Naive thymus-derived CD8-positive, alpha-beta T cell (primary cell): ENCODE measurements at regions of chr17 and their contacts with region 1.

Region 1: DNA sequence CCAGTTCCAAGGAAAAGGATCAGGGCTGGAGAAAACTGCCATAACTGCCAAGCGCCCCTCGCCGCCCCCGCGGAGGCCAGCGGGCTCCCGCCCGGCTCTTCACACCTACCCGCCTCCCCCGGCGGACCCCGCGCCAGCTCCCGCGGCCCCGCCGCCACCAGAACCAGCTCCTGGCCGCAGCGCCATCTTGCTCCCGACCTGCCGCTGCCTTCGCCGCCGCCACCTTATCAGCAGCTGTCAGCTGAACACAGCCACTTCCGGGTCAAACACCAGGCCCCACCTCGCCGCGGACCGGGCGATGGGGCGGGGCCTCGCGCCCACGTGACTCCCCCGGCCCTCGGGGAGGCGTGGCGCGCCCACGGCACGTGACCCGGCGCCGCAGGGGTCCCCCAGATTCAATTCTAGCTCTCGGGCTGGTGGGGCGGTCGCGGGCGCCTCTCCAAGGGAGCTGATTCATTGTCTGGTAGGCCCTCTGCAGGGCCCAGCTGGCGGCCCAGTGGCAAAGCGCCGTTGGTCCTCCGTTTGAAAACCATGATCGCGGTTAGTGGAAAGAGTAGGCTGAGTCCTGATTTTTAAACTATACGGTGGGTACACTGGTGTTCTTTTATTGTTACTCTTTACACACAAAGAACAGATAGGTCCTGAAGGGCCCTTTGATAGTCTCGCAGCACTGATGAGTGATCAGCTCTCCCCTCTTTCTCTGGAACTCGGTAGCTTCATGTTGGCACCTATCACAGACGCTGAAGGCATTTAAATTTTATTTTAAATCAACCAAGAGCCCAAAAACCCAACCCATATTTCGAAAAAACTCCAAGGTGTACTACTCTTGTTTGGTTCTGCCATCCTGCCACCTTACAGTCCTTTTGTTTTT is at the start of gene SYNRG:
- DNase-seq: peak; percentile 93 to 97 (median 96)
- ATAC-seq: peak; percentile 89 to 90
- H3K4me3 Mint-ChIP-seq: peak within 1 kb of the TSS; percentile 76 to 98 (median 88)
- H3K27ac Mint-ChIP-seq: peak within 1 kb of the TSS; percentile 90 to 96 (median 95)
- H3K4me1 Mint-ChIP-seq: peaks cover 19 to 47% (median 33%) of the 10 kb centered on the region in 4 donors
- H3K27me3 Mint-ChIP-seq: no peaks in the 10 kb centered on the region
- polyA plus RNA-seq, gene SYNRG: 71.8 to 91.8 (median 87.2) TPM

Region 2: DNA sequence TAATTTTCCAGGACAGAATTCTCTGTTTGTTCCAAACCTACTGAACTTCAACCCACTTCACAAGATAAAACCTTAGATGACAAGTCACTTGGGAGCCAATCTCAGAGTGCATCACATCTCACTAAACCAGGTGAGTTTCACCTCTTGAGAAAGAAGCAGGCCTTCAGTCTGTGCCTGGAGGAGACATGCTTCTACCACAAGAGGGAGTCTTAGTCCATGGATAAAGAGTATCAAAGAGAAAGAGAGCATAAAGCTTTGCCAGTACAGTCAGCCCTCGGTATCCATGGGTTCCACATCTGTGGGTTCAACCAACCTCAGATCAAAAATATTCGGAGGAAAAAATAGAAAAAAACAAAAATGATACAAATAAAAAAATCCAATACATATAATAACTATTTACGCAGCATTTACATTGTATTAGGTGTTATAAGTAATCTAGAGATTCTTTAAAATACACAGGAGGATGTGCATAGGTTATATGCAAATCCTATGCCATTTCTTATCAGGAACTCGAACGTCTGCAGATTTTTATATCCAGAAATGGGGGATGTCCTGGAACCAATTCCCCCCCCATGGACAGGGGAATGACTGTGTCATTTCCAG is 82.1 kb before region 1 on chr17:
- POLR2A ChIA-PET with region 1: interaction called, 17 read pairs
- DNase-seq: peak in 7 of 10 donors; percentile 27 to 65 (median 40)
- ATAC-seq: peak; percentile 83 to 88
- H3K4me3 Mint-ChIP-seq: no peak overlapping the region
- H3K27ac Mint-ChIP-seq: peak overlapping the region; percentile 2 to 92 (median 46)
- H3K4me1 Mint-ChIP-seq: peaks cover 14 to 26% (median 19%) of the 10 kb centered on the region in 4 donors
- H3K27me3 Mint-ChIP-seq: no peaks in the 10 kb centered on the region

Region 3: GRCh38 chr17:37592291-37592690 is 17.1 kb before region 1 on chr17:
- POLR2A ChIA-PET with region 1: interaction called, 16 read pairs
- DNase-seq: no peak
- ATAC-seq: no peak
- H3K4me3 Mint-ChIP-seq: peak overlapping the region in 6 of 10 donors; percentile 5 to 53 (median 42)
- H3K27ac Mint-ChIP-seq: peak overlapping the region in 5 of 10 donors; percentile 13 to 82 (median 44)
- H3K4me1 Mint-ChIP-seq: peaks cover 21 to 81% (median 69%) of the 10 kb centered on the region in 4 donors
- H3K27me3 Mint-ChIP-seq: no peaks in the 10 kb centered on the region

Region 4: GRCh38 chr17:37651849-37652248 is 42.4 kb after region 1 on chr17:
- POLR2A ChIA-PET with region 1: no interaction called
- DNase-seq: no peak
- ATAC-seq: no peak
- H3K4me3 Mint-ChIP-seq: no peak overlapping the region
- H3K27ac Mint-ChIP-seq: no peak overlapping the region
- H3K4me1 Mint-ChIP-seq: no peaks in the 10 kb centered on the region
- H3K27me3 Mint-ChIP-seq: peaks cover 20 to 44% (median 33%) of the 10 kb centered on the region in 5 donors

Region 5: GRCh38 chr17:37701496-37701898 is 92.1 kb after region 1 on chr17:
- POLR2A ChIA-PET with region 1: no interaction called
- DNase-seq: peak in 7 of 10 donors; percentile 11 to 37 (median 22)
- ATAC-seq: peak in 1 of 2 donors; percentile 46
- H3K4me3 Mint-ChIP-seq: peak overlapping the region in 6 of 10 donors; percentile 16 to 50 (median 32)
- H3K27ac Mint-ChIP-seq: peak overlapping the region in 2 of 10 donors; percentile 16 to 81
- H3K4me1 Mint-ChIP-seq: peaks cover 4 to 20% (median 9%) of the 10 kb centered on the region in 4 donors
- H3K27me3 Mint-ChIP-seq: peaks cover 7 to 29% (median 17%) of the 10 kb centered on the region in 5 donors